Colonic mucosa (tissue), 4 donors: ENCODE measurements at regions of chr10 and their contacts with region 1.

Region 1: GRCh38 chr10:61903221-61903927 is 1.9 kb downstream of the ARID5B start:
- DNase-seq: peak; percentile 74
- H3K4me3 ChIP-seq: peak overlapping the region; percentile 51
- H3K27ac ChIP-seq: peak overlapping the region; percentile 93
- H3K4me1 ChIP-seq: peaks cover 8% of the 10 kb centered on the region
- H3K27me3 ChIP-seq: no peaks in the 10 kb centered on the region
- CTCF ChIP-seq: peak; percentile 17

Region 2: DNA sequence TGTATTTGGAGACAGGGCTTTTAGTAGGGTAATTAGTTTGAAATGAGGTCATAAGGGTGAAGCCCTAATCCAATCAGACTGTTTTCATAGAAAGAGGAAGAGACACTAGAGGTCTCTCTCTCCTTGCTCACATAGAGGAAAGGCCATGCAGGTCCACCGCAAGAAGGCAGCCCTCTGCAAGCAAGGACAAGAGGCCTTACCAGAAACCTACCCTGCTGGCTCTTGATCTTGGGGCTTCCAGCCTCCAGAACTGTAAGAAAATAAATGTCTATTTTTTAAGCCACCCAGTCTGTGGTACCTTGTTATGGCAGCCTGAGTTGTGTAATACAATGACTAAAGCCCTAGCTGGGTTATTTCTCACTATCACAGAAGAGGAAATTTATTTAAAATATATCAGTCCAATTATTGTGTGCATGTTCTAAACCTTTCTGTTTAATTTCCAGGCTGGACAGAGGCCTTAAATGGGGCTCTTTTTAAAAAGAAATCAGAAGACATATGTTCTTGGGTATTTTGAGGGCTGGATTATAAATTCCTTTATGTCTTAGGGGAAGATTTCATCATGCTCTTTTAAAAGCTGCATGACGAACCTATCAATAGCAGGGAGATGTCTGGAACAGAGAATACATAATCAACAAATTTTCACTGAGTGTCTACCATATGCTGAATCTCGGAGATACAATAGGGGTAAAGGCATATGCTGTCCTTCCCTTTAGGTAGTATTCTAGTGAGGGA is 437.3 kb before region 1 on chr10:
- intact Hi-C with region 1: no loop called
- DNase-seq: no peak
- H3K4me3 ChIP-seq: no peak overlapping the region
- H3K27ac ChIP-seq: no peak overlapping the region
- H3K4me1 ChIP-seq: no peaks in the 10 kb centered on the region
- H3K27me3 ChIP-seq: no peaks in the 10 kb centered on the region
- CTCF ChIP-seq: no peak

Region 3: GRCh38 chr10:62038609-62039190 is 135.3 kb after region 1 on chr10:
- intact Hi-C with region 1: loop called (anchors 5 kb)
- DNase-seq: peak; percentile 85
- H3K4me3 ChIP-seq: no peak overlapping the region
- H3K27ac ChIP-seq: peak overlapping the region; percentile 50
- H3K4me1 ChIP-seq: peaks cover 3% of the 10 kb centered on the region
- H3K27me3 ChIP-seq: no peaks in the 10 kb centered on the region
- CTCF ChIP-seq: peak; percentile 77